Activated CD8-positive, alpha-beta T cell treated with anti-CD3 and anti-CD28 coated beads for 36 hours (primary cell): ENCODE measurements at regions of chr5 and their contacts with region 1.

Region 1: DNA sequence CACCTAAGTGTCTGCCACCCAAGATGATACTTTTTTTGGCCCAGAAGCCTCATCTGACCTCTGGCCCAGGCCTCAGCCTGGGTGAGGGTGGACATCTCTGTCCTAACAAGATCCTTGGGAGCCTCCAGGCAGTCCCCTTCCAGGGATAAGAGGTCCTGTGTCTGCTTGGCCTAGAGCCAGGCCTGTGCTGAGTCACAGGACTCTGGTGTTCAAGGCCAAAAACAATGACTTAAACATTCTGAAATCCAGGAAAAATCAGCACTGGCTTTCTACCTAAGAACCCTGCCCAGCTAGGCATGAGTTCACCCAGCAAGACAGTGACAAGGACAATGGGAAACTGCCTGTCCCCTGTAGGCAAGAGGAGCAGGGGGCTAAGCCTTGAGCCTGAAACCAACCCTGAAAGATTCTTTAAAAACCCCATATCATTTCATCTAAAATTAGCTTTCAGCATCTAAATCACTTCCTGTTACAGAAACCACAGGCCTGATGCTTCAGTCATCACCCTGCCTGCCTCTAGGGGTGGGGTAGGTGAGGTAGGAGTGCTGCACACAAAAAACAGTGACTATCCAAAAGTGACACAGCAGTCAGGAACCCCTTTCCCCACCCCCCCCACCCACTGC is 29.9 kb downstream of the CSF2 start:
- DNase-seq: peak; percentile 86
- ATAC-seq: peak; percentile 60
- H3K4me3 Mint-ChIP-seq: peak overlapping the region; percentile 47
- H3K27ac Mint-ChIP-seq: peak overlapping the region; percentile 90
- H3K4me1 Mint-ChIP-seq: peaks cover 80% of the 10 kb centered on the region
- H3K27me3 Mint-ChIP-seq: no peaks in the 10 kb centered on the region
- CTCF ChIP-seq: no peak

Region 2: GRCh38 chr5:132073231-132074013 is 30.0 kb before region 1 on chr5 and contains the start of gene CSF2:
- CTCF ChIA-PET with region 1: interaction called, 5 read pairs
- POLR2A ChIA-PET with region 1: interaction called, 6 read pairs
- intact Hi-C with region 1: loop called (anchors 2 kb)
- DNase-seq: peak; percentile 65
- ATAC-seq: peak; percentile 37
- H3K4me3 Mint-ChIP-seq: peak within 1 kb of the TSS; percentile 74
- H3K27ac Mint-ChIP-seq: peak within 1 kb of the TSS; percentile 80
- H3K4me1 Mint-ChIP-seq: peaks cover 68% of the 10 kb centered on the region
- H3K27me3 Mint-ChIP-seq: no peaks in the 10 kb centered on the region
- CTCF ChIP-seq: no peak
- total RNA-seq, gene CSF2: 61.5 to 64.1 TPM

Region 3: GRCh38 chr5:132083071-132083678 is 20.3 kb before region 1 on chr5:
- CTCF ChIA-PET with region 1: interaction called, 3 read pairs
- POLR2A ChIA-PET with region 1: interaction called, 17 read pairs
- intact Hi-C with region 1: no loop called
- DNase-seq: peak; percentile 79
- ATAC-seq: peak; percentile 88
- H3K4me3 Mint-ChIP-seq: no peak overlapping the region
- H3K27ac Mint-ChIP-seq: peak overlapping the region; percentile 82
- H3K4me1 Mint-ChIP-seq: peaks cover 54% of the 10 kb centered on the region
- H3K27me3 Mint-ChIP-seq: no peaks in the 10 kb centered on the region
- CTCF ChIP-seq: no peak

Region 4: GRCh38 chr5:132090107-132090506 is 13.3 kb before region 1 on chr5:
- CTCF ChIA-PET with region 1: interaction called, 4 read pairs
- POLR2A ChIA-PET with region 1: interaction called, 13 read pairs
- intact Hi-C with region 1: no loop called
- DNase-seq: peak; percentile 62
- ATAC-seq: peak; percentile 75
- H3K4me3 Mint-ChIP-seq: no peak overlapping the region
- H3K27ac Mint-ChIP-seq: peak overlapping the region; percentile 30
- H3K4me1 Mint-ChIP-seq: peaks cover 35% of the 10 kb centered on the region
- H3K27me3 Mint-ChIP-seq: no peaks in the 10 kb centered on the region
- CTCF ChIP-seq: no peak

Region 5: DNA sequence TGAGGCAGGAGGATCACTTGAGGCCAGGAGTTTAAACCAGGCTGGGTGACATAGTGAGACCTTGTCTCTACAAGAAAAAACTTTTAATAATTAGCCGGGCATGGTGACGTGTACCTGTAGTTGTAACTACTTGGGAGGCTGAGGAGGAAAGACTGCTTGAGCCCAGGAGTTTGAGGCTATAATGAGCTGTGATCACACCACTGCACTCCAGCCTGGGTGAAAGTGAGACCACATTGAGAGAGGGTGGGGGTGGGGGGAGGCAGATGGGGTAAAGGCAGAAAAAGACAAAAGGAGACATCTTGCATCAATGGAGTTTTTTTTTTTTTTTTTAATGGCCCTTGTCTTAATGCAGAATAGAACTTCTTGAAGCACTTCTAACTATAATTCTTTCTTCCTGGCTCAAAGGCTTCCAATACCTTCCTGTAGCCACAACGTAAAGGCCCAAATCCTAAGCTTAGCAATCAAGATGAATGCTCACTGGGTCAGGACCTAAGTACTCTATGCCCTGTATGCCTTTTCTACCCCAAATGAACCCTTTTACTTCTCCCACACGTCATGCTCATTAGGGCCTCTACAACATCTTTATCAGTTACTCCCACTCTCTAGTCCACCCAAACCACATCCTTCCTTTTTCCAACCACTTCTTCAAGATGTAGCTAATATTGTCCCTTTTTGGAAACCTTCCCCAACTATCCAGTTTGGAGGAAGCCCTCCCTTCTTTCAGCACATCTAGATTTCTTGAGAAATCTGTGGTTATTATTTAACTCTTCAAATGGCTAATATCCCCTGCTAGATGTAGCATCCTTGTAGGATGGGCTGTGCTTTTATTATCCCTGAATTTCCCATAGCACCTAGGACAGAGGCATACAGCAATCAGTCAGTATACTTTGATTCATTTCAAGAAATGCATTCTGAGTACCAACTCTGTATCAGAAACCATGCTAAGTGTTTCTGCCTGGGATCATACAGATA is 11.0 kb after region 1 on chr5:
- CTCF ChIA-PET with region 1: interaction called, 9 read pairs
- POLR2A ChIA-PET with region 1: interaction called, 15 read pairs
- intact Hi-C with region 1: loop called (anchors 1 kb)
- DNase-seq: no peak
- ATAC-seq: peak; percentile 53
- H3K4me3 Mint-ChIP-seq: no peak overlapping the region
- H3K27ac Mint-ChIP-seq: peak overlapping the region; percentile 58
- H3K4me1 Mint-ChIP-seq: peaks cover 65% of the 10 kb centered on the region
- H3K27me3 Mint-ChIP-seq: no peaks in the 10 kb centered on the region
- CTCF ChIP-seq: no peak

Region 6: GRCh38 chr5:132180134-132180745 is 76.8 kb after region 1 on chr5:
- CTCF ChIA-PET with region 1: interaction called, 12 read pairs
- POLR2A ChIA-PET with region 1: no interaction called
- intact Hi-C with region 1: loop called (anchors 5 kb)
- DNase-seq: peak; percentile 26
- ATAC-seq: peak; percentile 26
- H3K4me3 Mint-ChIP-seq: no peak overlapping the region
- H3K27ac Mint-ChIP-seq: peak overlapping the region; percentile 47
- H3K4me1 Mint-ChIP-seq: peaks cover 36% of the 10 kb centered on the region
- H3K27me3 Mint-ChIP-seq: no peaks in the 10 kb centered on the region
- CTCF ChIP-seq: peak; percentile 75